Heart left ventricle (tissue), 16 donors: ENCODE measurements at regions of chr2 and their contacts with region 1.

Region 1: GRCh38 chr2:144516981-144517865 is 2.7 kb downstream of the ZEB2 start:
- DNase-seq: peak; percentile 56 to 82 (median 73)
- ATAC-seq: peak; percentile 9 to 71 (median 54)
- H3K4me3 ChIP-seq: peak overlapping the region; percentile 63 to 96 (median 82)
- H3K27ac ChIP-seq: peak overlapping the region; percentile 91 to 99 (median 98)
- H3K4me1 ChIP-seq: peaks cover 0 to 31% (median 13%) of the 10 kb centered on the region in 12 donors
- H3K27me3 ChIP-seq: peaks cover 0 to 6% (median 0%) of the 10 kb centered on the region in 9 donors
- CTCF ChIP-seq: no peak
- POLR2A ChIP-seq: peak in 1 of 2 donors; percentile 17

Region 2: GRCh38 chr2:143433251-143433650 is 1084.0 kb before region 1 on chr2:
- intact Hi-C with region 1: loop called in 1 of 10 experiments (anchors 10 kb)
- DNase-seq: no peak
- ATAC-seq: peak in 1 of 4 donors; percentile 59
- H3K4me3 ChIP-seq: no peak overlapping the region
- H3K27ac ChIP-seq: peak overlapping the region in 1 of 12 donors; percentile 10
- H3K4me1 ChIP-seq: peaks cover 0 to 15% (median 0%) of the 10 kb centered on the region in 12 donors
- H3K27me3 ChIP-seq: no peaks in the 10 kb centered on the region
- CTCF ChIP-seq: peak in 8 of 12 donors; percentile 9 to 47 (median 31)
- POLR2A ChIP-seq: no peak

Region 3: GRCh38 chr2:144170179-144170815 is 346.9 kb before region 1 on chr2:
- intact Hi-C with region 1: no loop called
- DNase-seq: no peak
- ATAC-seq: no peak
- H3K4me3 ChIP-seq: no peak overlapping the region
- H3K27ac ChIP-seq: no peak overlapping the region
- H3K4me1 ChIP-seq: no peaks in the 10 kb centered on the region
- H3K27me3 ChIP-seq: no peaks in the 10 kb centered on the region
- CTCF ChIP-seq: no peak
- POLR2A ChIP-seq: no peak

Region 4: DNA sequence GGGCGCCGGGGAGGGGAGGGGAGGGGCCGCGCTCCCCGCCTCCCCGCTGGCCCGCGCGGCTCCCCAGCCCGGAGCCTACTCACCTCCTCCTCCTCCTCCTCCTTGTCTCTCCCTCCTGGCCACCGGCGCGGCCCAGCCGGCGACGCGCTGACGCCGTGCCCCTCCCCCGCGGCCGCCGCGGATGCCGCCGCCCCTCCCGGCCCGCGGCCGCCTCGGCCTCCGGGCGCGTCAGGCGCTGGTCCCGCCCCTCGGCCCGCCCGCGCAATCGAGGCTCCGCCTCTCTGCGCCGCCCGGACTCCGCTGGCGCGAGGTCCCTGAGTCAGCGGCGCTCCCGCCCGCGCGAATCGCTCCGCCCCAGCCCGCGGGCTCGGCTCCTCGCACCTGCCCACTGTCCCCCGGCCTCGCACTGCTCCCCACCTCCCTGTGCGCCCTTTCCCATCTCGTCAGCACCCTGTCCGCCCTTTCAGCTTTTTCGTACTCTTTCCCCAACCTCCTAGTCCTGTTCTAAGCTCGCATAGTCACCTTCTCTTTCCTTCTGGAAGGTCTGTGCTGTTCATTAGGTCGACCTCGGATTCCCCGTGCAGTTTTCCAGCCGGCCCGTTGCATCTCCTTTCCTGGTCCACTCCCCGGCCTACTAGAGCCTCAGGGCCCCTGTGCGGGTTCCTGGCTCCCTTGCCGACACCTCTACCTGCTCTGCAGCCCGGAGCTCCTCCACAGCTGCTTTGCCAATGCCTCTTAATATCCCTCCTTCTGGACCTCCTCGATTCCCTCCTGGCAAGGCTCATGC is 184.7 kb before region 1 on chr2:
- intact Hi-C with region 1: loop called (anchors 2 to 5 kb)
- DNase-seq: peak; percentile 87 to 94 (median 91)
- ATAC-seq: peak; percentile 90 to 97 (median 95)
- H3K4me3 ChIP-seq: peak overlapping the region; percentile 66 to 95 (median 82)
- H3K27ac ChIP-seq: peak overlapping the region; percentile 79 to 95 (median 88)
- H3K4me1 ChIP-seq: peaks cover 0 to 18% (median 11%) of the 10 kb centered on the region in 12 donors
- H3K27me3 ChIP-seq: no peaks in the 10 kb centered on the region
- CTCF ChIP-seq: no peak
- POLR2A ChIP-seq: peak in 1 of 2 donors; percentile 63

Region 5: DNA sequence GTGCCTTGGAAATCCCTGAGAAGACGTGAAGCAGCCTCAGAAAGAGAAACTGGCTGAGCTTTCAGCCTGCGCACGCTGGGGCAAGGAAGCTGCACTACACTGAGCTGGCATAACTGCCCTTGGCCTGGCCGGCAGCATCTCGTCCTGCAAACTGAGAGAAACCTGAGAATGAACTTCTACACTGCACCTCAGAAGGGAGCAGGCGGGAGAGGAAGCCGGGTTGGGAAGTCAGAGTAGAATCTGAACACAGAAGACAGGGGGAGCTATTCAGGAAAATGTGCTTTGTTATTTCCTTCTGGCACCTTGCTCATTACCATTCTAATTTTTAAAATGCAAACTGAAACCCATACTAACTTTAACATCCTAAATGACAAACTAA is 68.2 kb before region 1 on chr2:
- intact Hi-C with region 1: loop called in 3 of 10 experiments (anchors 5 kb)
- DNase-seq: peak in 2 of 5 donors; percentile 42 to 56
- ATAC-seq: peak; percentile 33 to 74 (median 60)
- H3K4me3 ChIP-seq: peak overlapping the region in 7 of 12 donors; percentile 10 to 29 (median 23)
- H3K27ac ChIP-seq: peak overlapping the region; percentile 23 to 63 (median 58)
- H3K4me1 ChIP-seq: peaks cover 0 to 86% (median 45%) of the 10 kb centered on the region in 12 donors
- H3K27me3 ChIP-seq: no peaks in the 10 kb centered on the region
- CTCF ChIP-seq: peak in 11 of 12 donors; percentile 17 to 63 (median 46)
- POLR2A ChIP-seq: no peak

Region 6: DNA sequence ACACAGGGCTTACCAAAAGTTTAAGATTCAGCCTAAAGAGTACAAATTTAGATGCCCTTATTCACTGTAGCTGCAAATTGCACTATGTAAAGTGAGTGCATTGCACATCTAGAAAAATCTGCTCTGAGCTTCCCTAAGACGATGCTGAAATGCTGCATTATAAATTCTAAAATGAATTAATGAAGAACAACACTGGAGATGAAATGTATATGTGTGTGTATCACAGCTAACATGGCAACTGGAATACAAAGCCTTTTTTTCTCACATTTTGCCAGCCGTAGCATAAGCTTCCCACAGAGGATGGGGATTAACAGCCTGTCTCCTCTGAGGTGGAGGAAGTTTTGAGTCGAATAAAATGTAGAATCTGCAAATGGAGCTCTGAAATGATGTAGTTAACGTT is 341.0 kb after region 1 on chr2:
- intact Hi-C with region 1: no loop called
- DNase-seq: no peak
- ATAC-seq: no peak
- H3K4me3 ChIP-seq: no peak overlapping the region
- H3K27ac ChIP-seq: no peak overlapping the region
- H3K4me1 ChIP-seq: no peaks in the 10 kb centered on the region
- H3K27me3 ChIP-seq: no peaks in the 10 kb centered on the region
- CTCF ChIP-seq: no peak
- POLR2A ChIP-seq: no peak

Region 7: DNA sequence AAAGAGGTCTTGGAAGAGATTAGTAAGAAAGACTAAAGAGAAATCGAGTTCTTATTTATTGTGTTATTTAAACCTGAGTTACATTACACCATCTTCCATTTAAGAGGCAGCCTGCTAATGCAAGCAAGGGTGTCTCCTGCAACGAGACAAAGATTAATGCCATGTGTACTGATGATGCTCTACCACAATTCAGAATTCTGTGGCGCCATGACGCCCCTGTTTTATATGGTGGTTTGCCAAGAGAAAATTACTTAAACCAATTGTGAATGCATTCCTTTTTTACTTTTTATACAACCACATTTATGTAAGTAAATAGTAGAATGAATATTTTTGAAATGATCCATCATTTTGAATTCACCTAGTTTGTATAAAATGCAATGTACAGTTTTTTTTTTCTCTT is 358.8 kb after region 1 on chr2:
- intact Hi-C with region 1: loop called in 3 of 10 experiments (anchors 10 kb)
- DNase-seq: no peak
- ATAC-seq: no peak
- H3K4me3 ChIP-seq: no peak overlapping the region
- H3K27ac ChIP-seq: peak overlapping the region in 5 of 12 donors; percentile 13 to 59 (median 53)
- H3K4me1 ChIP-seq: peaks cover 0 to 14% (median 0%) of the 10 kb centered on the region in 12 donors
- H3K27me3 ChIP-seq: no peaks in the 10 kb centered on the region
- CTCF ChIP-seq: no peak
- POLR2A ChIP-seq: no peak

Region 8: DNA sequence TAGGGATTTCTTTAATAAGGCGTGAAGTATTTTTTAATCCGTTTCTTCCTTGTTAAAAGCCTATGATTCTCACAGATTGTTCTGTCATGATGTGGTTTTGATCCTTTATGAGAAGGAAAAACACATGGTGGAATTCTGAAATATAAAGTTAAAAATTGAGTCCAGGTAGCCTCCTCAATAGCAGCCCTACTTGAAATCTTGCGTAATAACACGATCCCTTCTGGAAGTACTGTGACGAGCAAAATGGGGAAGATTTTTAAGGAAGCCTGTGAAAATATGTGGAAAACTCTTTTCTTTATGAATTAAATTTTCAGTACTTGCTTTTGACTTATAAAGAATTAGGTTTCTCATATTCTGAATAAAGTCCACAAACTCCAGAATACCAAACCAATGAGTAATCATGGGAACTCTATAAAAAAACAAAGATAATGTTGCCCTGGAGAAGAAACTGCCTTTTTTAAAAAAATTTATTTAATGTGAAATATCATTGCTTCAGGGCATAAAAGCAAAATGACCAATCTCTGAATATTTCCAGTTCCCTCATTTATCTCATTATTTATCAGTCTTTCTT is 479.1 kb after region 1 on chr2:
- intact Hi-C with region 1: loop called in 1 of 10 experiments (anchors 5 kb)
- DNase-seq: no peak
- ATAC-seq: no peak
- H3K4me3 ChIP-seq: peak overlapping the region in 2 of 12 donors; percentile 26 to 31
- H3K27ac ChIP-seq: peak overlapping the region; percentile 1 to 70 (median 56)
- H3K4me1 ChIP-seq: peaks cover 0 to 27% (median 2%) of the 10 kb centered on the region in 12 donors
- H3K27me3 ChIP-seq: no peaks in the 10 kb centered on the region
- CTCF ChIP-seq: no peak
- POLR2A ChIP-seq: no peak

Region 9: DNA sequence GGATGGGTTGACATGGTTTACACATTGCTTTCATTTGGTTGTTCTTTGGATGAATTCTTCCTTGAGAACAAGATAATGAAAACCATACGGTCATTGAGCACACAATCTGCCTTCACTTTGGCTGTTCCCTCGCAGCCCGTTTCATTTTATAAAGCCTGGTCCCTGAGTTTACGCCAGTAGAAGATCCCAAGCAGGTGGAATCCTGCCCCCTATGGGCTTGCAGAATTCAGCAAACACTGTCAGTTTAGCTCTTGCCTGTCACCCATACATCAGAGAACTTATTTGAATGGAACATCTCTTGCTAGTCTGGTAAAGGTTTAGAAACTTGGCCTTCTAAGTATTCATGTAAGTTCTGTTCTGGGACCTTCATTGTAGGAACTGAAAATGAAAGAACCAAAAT is 669.1 kb after region 1 on chr2:
- intact Hi-C with region 1: loop called in 3 of 10 experiments (anchors 5 to 10 kb)
- DNase-seq: peak in 2 of 5 donors; percentile 22 to 25
- ATAC-seq: peak in 3 of 4 donors; percentile 57 to 65 (median 59)
- H3K4me3 ChIP-seq: peak overlapping the region in 1 of 12 donors; percentile 1
- H3K27ac ChIP-seq: peak overlapping the region in 6 of 12 donors; percentile 26 to 68 (median 45)
- H3K4me1 ChIP-seq: peaks cover 0 to 21% (median 0%) of the 10 kb centered on the region in 12 donors
- H3K27me3 ChIP-seq: no peaks in the 10 kb centered on the region
- CTCF ChIP-seq: peak in 9 of 12 donors; percentile 10 to 49 (median 29)
- POLR2A ChIP-seq: no peak